ENCODE measurements at regions of chr5 and their contacts with region 1.

Region 1: DNA sequence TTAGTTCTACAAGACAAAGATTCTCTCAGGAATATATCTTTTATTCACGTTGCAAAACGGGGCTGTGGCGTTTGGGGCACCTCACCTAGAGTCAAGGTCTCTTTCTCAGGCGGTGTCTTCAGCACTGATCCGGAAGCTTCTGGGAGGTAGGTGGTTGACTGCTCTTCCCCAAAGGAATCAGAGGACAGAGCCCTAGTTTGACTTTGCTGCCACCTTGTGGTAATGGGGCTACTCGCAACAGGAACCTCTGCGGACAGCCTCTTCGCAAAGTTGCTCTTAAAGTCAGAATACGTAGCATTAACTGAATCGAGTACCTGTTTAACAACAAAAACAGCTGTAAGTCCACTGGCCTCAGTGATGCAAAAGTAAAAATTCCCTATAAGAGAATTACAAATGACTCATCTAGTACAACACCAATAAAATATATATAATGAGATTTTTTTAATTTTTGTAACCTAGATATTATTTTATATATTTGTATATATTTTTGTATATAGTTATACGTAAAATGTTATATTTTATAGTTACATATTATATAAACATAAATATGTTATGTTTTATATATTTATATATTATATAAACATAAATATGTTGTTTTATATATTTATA is 13.3 kb upstream of the GPX8 start:
- DNase-seq: no peak
- H3K4me3 ChIP-seq: no peak overlapping the region
- H3K27ac ChIP-seq: no peak overlapping the region
- H3K4me1 ChIP-seq: no peaks in the 10 kb centered on the region
- H3K27me3 ChIP-seq: no peaks in the 10 kb centered on the region
- CTCF ChIP-seq: peak; percentile 86 to 88 (median 86)
- POLR2A ChIP-seq: no peak

Region 2: DNA sequence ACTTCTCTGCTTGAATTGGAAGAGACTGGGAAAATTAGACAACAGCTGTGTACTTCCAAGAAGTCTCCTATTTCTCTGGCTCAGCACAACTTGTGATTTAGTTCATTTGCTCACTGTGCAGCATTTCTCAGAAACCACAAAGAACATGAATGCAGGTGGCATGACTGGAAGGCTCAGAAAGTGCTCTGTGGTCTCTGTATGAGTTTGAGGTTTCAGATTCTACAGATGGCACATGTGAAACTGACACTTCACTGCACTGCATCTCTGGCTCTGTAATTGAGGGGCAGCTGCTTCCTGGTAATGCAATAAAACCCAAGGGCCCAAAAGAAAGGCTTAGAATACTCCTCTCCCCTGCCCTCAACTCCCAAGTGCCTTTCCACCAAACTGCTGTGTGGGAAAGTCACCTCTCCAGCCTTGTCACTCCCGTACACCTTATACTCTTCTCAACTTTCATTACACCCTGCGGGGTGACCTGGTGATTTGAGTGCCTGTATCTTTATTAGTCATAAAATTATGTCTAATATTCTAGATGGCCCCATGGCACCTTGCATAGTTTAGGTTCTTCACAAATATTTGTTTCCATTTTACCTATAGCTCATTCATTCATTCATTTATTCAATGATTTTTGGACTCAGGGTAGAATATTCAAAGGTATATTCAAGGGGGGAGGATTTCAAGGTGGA is 243.7 kb before region 1 on chr5:
- intact Hi-C with region 1: loop called (anchors 5 kb)
- DNase-seq: no peak
- H3K4me3 ChIP-seq: no peak overlapping the region
- H3K27ac ChIP-seq: no peak overlapping the region
- H3K4me1 ChIP-seq: peaks cover 4% of the 10 kb centered on the region
- H3K27me3 ChIP-seq: no peaks in the 10 kb centered on the region
- CTCF ChIP-seq: no peak
- POLR2A ChIP-seq: no peak

Region 3: GRCh38 chr5:54990841-54991258 is 155.8 kb before region 1 on chr5:
- intact Hi-C with region 1: no loop called
- DNase-seq: no peak
- H3K4me3 ChIP-seq: no peak overlapping the region
- H3K27ac ChIP-seq: no peak overlapping the region
- H3K4me1 ChIP-seq: no peaks in the 10 kb centered on the region
- H3K27me3 ChIP-seq: no peaks in the 10 kb centered on the region
- CTCF ChIP-seq: no peak
- POLR2A ChIP-seq: no peak

Measured in vagina (tissue), 2 donors.